Heart left ventricle (tissue), 16 donors: ENCODE measurements at regions of chr18 and their contacts with region 1.

Region 1: DNA sequence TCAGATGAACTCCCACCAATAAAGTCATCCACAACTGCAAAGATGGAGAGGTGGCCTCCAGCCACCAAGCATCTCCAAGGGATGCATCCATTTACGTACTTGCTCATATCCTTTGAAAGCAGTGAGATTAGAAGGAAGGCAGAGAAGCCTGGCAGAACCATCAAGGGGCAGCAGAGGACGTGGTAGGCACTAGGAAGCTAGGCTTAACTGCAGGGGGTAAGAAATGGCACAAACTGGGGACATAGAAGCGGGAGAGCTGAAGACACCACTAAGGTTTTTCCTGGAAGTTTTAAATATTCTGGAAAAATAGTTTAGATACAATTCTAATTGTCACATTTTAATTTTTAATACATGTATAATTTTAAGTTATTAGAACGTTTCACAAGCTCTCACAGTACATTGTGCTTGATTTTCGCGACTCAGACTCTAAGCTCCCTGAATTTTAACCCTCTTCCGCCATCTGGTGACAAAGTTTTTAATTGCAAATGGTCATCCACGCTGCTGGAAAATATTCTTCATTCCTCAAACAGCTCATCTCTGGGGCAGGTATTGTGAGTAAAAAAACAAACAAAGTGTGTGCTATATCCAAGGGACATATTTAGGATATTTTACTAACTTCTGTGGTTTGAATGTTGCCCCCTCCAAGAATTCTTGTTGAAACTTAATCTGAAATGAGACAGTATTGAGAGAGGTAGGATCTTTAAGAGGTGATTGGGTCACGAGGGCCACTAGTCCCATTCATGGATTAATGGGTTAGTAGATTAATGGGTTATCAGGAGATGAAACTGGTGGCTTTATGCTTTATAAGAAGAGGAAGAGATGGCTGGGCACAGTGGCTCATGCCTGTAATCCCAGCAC is 1.6 kb upstream of the PSTPIP2 start:
- DNase-seq: no peak
- ATAC-seq: peak in 3 of 4 donors; percentile 38 to 49 (median 42)
- H3K4me3 ChIP-seq: no peak overlapping the region
- H3K27ac ChIP-seq: no peak overlapping the region
- H3K4me1 ChIP-seq: peaks cover 0 to 45% (median 19%) of the 10 kb centered on the region in 12 donors
- H3K27me3 ChIP-seq: no peaks in the 10 kb centered on the region
- CTCF ChIP-seq: peak; percentile 45 to 78 (median 65)
- POLR2A ChIP-seq: no peak

Region 2: GRCh38 chr18:44786688-44787087 is 1287.0 kb before region 1 on chr18:
- intact Hi-C with region 1: no loop called
- DNase-seq: no peak
- ATAC-seq: no peak
- H3K4me3 ChIP-seq: peak overlapping the region in 1 of 12 donors; percentile 20
- H3K27ac ChIP-seq: peak overlapping the region in 1 of 12 donors; percentile 34
- H3K4me1 ChIP-seq: peaks cover 5 to 47% (median 33%) of the 10 kb centered on the region in 12 donors
- H3K27me3 ChIP-seq: peaks cover 0 to 4% (median 0%) of the 10 kb centered on the region in 9 donors
- CTCF ChIP-seq: no peak
- POLR2A ChIP-seq: no peak

Region 3: GRCh38 chr18:45664824-45665763 is 408.6 kb before region 1 on chr18:
- intact Hi-C with region 1: loop called in 9 of 10 experiments (anchors 2 to 10 kb)
- DNase-seq: peak in 3 of 5 donors; percentile 42 to 52 (median 43)
- ATAC-seq: peak; percentile 43 to 76 (median 68)
- H3K4me3 ChIP-seq: no peak overlapping the region
- H3K27ac ChIP-seq: peak overlapping the region in 2 of 12 donors; percentile 57 to 61
- H3K4me1 ChIP-seq: peaks cover 0 to 34% (median 16%) of the 10 kb centered on the region in 12 donors
- H3K27me3 ChIP-seq: no peaks in the 10 kb centered on the region
- CTCF ChIP-seq: peak; percentile 89 to 95 (median 92)
- POLR2A ChIP-seq: no peak

Region 4: DNA sequence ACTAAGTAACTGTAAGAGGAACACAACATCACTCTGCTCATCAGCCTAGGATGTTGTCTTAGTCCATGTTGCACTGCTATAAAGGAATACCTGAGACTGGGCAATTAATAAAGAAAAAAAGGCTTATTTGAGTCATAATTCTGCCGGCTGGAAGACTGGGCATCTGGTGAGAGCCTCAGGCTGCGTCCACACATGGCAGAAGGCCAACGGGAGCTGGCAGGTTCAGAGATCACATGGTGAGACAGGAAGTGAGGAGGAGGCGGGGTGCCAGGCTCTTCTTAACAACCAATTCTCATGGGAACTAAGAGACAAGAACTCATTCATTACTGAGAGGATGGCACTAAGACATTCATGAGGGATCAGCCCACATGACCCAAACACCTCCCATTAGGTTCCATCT is 153.3 kb before region 1 on chr18:
- intact Hi-C with region 1: loop called in 2 of 10 experiments (anchors 10 kb)
- DNase-seq: peak; percentile 78 to 92 (median 88)
- ATAC-seq: peak; percentile 91 to 95 (median 92)
- H3K4me3 ChIP-seq: no peak overlapping the region
- H3K27ac ChIP-seq: no peak overlapping the region
- H3K4me1 ChIP-seq: peaks cover 0 to 17% (median 10%) of the 10 kb centered on the region in 12 donors
- H3K27me3 ChIP-seq: no peaks in the 10 kb centered on the region
- CTCF ChIP-seq: no peak
- POLR2A ChIP-seq: no peak

Region 5: GRCh38 chr18:45951016-45951714 is 122.5 kb before region 1 on chr18:
- intact Hi-C with region 1: loop called in 1 of 10 experiments (anchors 5 kb)
- DNase-seq: peak in 1 of 5 donors; percentile 42
- ATAC-seq: no peak
- H3K4me3 ChIP-seq: no peak overlapping the region
- H3K27ac ChIP-seq: no peak overlapping the region
- H3K4me1 ChIP-seq: peaks cover 0 to 10% (median 0%) of the 10 kb centered on the region in 12 donors
- H3K27me3 ChIP-seq: no peaks in the 10 kb centered on the region
- CTCF ChIP-seq: no peak
- POLR2A ChIP-seq: no peak

Region 6: DNA sequence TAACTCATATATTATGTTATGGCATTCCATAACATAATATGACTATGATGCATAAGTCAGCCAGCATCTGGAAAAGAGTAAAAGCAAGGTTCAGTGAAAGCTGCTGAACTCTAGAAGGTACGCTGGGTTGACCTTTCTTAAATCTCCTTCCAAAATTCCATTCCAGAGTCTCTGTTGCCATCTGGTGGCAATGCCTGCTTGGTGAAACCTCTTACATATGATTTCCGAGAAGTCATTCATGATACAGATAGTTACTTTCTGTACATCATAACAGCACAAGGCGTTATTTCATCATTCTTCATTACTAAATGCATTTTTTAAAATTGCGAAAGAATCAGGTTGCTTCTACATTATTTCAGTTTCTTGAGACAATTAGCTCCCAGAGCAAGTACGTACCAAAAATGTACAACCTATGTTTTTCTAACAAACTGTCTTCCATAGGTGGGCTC is 99.6 kb before region 1 on chr18:
- intact Hi-C with region 1: loop called in 7 of 10 experiments (anchors 2 to 10 kb)
- DNase-seq: peak in 4 of 5 donors; percentile 27 to 48 (median 41)
- ATAC-seq: peak; percentile 63 to 87 (median 78)
- H3K4me3 ChIP-seq: no peak overlapping the region
- H3K27ac ChIP-seq: peak overlapping the region in 1 of 12 donors; percentile 32
- H3K4me1 ChIP-seq: peaks cover 0 to 6% (median 0%) of the 10 kb centered on the region in 12 donors
- H3K27me3 ChIP-seq: no peaks in the 10 kb centered on the region
- CTCF ChIP-seq: peak; percentile 54 to 78 (median 66)
- POLR2A ChIP-seq: no peak

Region 7: GRCh38 chr18:46134920-46135675 is 61.4 kb after region 1 on chr18:
- intact Hi-C with region 1: no loop called
- DNase-seq: peak in 4 of 5 donors; percentile 29 to 47 (median 39)
- ATAC-seq: peak; percentile 83 to 96 (median 94)
- H3K4me3 ChIP-seq: no peak overlapping the region
- H3K27ac ChIP-seq: peak overlapping the region in 8 of 12 donors; percentile 27 to 71 (median 42)
- H3K4me1 ChIP-seq: peaks cover 0 to 12% (median 0%) of the 10 kb centered on the region in 12 donors
- H3K27me3 ChIP-seq: no peaks in the 10 kb centered on the region
- CTCF ChIP-seq: no peak
- POLR2A ChIP-seq: no peak

Region 8: DNA sequence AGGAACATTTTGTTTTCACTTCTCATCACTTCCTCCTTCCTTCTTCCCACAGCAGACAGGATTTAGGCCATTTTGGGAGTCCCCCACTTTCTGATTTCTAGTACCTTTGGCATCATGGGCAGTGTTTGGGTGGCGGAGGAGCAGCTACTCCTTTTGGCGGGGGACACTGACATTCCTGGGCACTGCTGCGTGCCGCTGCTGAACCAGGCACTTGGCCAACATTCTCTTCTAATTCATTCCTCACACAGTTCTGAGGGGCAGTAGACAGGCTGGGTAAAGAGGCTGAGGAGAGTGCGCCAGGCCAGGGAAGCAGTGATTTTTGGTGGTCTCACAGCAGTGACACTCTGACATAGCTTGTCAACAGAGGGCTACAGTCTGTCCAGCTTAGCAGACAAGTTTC is 313.1 kb after region 1 on chr18:
- intact Hi-C with region 1: no loop called
- DNase-seq: peak in 4 of 5 donors; percentile 46 to 77 (median 56)
- ATAC-seq: peak; percentile 79 to 93 (median 92)
- H3K4me3 ChIP-seq: no peak overlapping the region
- H3K27ac ChIP-seq: peak overlapping the region in 8 of 12 donors; percentile 33 to 65 (median 54)
- H3K4me1 ChIP-seq: peaks cover 0 to 33% (median 21%) of the 10 kb centered on the region in 12 donors
- H3K27me3 ChIP-seq: no peaks in the 10 kb centered on the region
- CTCF ChIP-seq: no peak
- POLR2A ChIP-seq: no peak